ENCODE measurements at regions of chr13 and their contacts with region 1.

Region 1: DNA sequence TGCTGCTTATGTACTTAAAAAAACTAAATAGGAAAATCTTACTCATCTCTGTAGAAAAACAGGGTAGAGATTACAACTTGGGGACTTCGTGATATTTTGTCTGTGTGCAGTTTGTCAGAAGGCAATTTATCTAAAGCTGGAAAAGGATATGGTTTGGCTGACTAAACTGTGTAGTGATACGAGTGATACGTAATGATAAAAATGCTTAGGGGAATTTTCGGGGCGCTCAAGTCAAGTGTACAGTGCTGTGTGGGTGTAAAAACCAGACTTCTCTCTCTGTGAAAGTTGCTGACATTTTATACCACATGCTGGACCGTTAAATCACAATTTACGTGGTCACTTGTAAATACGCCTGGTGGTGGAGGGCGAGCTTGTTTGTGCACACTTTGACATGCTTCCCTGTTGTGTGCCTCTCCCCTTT is 221.7 kb downstream of the KCNRG start:
- DNase-seq: peak; percentile 55
- H3K4me3 Mint-ChIP-seq: peak overlapping the region; percentile 65
- H3K27ac Mint-ChIP-seq: peak overlapping the region; percentile 81
- H3K4me1 Mint-ChIP-seq: peaks cover 49% of the 10 kb centered on the region
- H3K27me3 Mint-ChIP-seq: peaks cover 23% of the 10 kb centered on the region

Region 2: DNA sequence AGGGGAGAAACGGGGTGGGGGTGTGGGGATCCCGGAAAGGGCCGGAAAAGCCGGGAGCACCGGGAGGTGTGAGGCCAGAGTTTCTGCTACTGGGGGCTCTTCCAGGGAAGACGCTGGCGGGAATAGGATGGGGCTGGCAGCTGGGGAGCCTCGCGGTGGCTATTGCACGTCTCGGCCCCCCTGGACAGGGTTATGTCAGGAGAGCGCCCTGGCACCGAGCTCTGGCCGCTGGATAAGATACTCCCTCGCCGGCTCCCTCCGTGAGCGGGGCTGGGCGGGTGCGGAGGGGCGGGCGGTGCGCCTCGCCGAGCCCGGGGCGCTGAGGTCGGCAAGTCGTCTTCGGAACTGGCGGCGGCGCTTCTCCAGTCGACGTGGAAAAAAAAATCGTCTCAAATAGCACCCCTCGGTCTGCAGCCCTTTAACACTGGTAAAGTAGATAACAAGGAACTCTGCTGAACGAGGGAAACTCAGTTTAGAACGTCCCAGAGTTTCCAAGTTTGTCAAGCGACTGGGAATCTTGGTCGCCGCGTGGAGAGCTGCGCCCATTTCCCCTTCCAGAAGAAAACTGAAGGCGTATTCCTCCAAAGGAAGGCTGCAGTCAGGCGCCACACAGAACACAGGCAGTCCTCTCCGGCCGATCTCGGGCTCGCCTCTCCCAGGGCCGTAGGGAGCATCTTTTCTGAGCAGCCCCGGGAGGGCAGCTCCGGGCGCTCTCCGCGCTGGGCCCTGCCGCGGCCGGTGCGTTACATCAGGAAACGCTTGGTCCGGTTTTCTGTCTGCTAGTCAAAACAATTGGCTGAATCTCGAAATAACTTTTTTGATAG is 106.6 kb before region 1 on chr13:
- CTCF ChIA-PET with region 1: interaction called, 3 read pairs
- POLR2A ChIA-PET with region 1: interaction called, 6 read pairs
- intact Hi-C with region 1: loop called (anchors 1 kb)
- DNase-seq: peak; percentile 42
- H3K4me3 Mint-ChIP-seq: peak overlapping the region; percentile 66
- H3K27ac Mint-ChIP-seq: peak overlapping the region; percentile 8
- H3K4me1 Mint-ChIP-seq: peaks cover 63% of the 10 kb centered on the region
- H3K27me3 Mint-ChIP-seq: peaks cover 64% of the 10 kb centered on the region

Region 3: GRCh38 chr13:50255639-50256038 is 18.7 kb after region 1 on chr13:
- CTCF ChIA-PET with region 1: no interaction called
- POLR2A ChIA-PET with region 1: interaction called, 3 read pairs
- intact Hi-C with region 1: loop called (anchors 2 kb)
- DNase-seq: no peak
- H3K4me3 Mint-ChIP-seq: no peak overlapping the region
- H3K27ac Mint-ChIP-seq: no peak overlapping the region
- H3K4me1 Mint-ChIP-seq: peaks cover 38% of the 10 kb centered on the region
- H3K27me3 Mint-ChIP-seq: peaks cover 27% of the 10 kb centered on the region

Region 4: DNA sequence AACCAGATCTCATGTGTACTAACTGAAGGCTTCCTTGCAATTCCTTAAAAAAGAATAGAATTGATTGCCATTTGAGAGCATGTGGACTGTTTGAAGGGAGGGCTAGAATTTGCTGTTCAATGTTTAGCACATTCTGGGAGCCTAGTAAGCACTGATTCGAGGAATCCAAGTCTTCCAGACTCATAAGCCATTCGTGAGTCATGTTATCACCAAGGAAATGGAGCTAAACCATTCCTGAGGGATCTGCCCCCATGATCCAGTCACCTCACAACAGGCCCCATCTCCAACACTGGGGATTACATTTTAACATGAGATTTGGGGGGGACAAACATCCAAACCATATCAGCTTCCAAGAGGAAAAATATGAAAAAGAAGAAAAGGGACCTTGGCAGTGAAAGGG is 54.7 kb after region 1 on chr13:
- CTCF ChIA-PET with region 1: no interaction called
- POLR2A ChIA-PET with region 1: no interaction called
- intact Hi-C with region 1: no loop called
- DNase-seq: no peak
- H3K4me3 Mint-ChIP-seq: no peak overlapping the region
- H3K27ac Mint-ChIP-seq: no peak overlapping the region
- H3K4me1 Mint-ChIP-seq: peaks cover 11% of the 10 kb centered on the region
- H3K27me3 Mint-ChIP-seq: no peaks in the 10 kb centered on the region

Region 5: GRCh38 chr13:50893211-50893852 is 656.4 kb after region 1 on chr13:
- CTCF ChIA-PET with region 1: no interaction called
- POLR2A ChIA-PET with region 1: no interaction called
- intact Hi-C with region 1: loop called (anchors 5 kb)
- DNase-seq: peak; percentile 16
- H3K4me3 Mint-ChIP-seq: peak overlapping the region; percentile 53
- H3K27ac Mint-ChIP-seq: peak overlapping the region; percentile 84
- H3K4me1 Mint-ChIP-seq: peaks cover 39% of the 10 kb centered on the region
- H3K27me3 Mint-ChIP-seq: no peaks in the 10 kb centered on the region

Measured in activated CD4-positive, alpha-beta memory T cell treated with anti-CD3 and anti-CD28 coated beads for 36 hours (primary cell).